IMR-90 (cell line): ENCODE measurements at regions of chr1 and their contacts with region 1.

Region 1: DNA sequence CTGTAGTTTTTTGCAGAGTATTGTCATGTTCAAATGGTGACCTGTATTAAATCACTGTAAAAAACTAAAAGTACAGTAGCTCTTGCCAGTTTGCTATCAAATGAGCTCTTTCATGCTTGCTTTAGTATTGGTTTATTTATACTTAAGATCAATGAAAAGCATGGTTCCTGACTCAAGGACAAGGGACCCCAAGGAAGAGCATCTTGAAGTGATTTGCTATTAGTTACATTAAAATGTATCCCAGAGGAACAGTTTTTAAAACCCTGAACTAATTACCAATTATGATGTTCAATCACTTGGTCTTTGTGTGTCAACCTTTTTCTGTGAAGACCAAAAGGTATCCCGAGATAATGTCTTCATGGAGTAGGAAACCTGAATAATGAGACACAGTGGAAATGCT is at the start of gene OR13G1:
- DNase-seq: no peak
- ATAC-seq: no peak
- H3K4me3 ChIP-seq: no peak within 1 kb of the TSS
- H3K27ac ChIP-seq: no peak within 1 kb of the TSS
- H3K4me1 ChIP-seq: no peaks in the 10 kb centered on the region
- H3K27me3 ChIP-seq: no peaks in the 10 kb centered on the region
- CTCF ChIP-seq: no peak
- POLR2A ChIP-seq: no peak
- RAD21 ChIP-seq: no peak
- total RNA-seq, gene OR13G1: not detected in 2 replicates

Region 2: GRCh38 chr1:247749870-247750269 is 70.2 kb after region 1 on chr1:
- CTCF ChIA-PET with region 1: no interaction called
- POLR2A ChIA-PET with region 1: no interaction called
- dilution Hi-C with region 1: no loop called
- in situ Hi-C with region 1: no loop called
- intact Hi-C with region 1: no loop called
- DNase-seq: no peak
- ATAC-seq: no peak
- H3K4me3 ChIP-seq: no peak overlapping the region
- H3K27ac ChIP-seq: no peak overlapping the region
- H3K4me1 ChIP-seq: no peaks in the 10 kb centered on the region
- H3K27me3 ChIP-seq: no peaks in the 10 kb centered on the region
- CTCF ChIP-seq: no peak
- POLR2A ChIP-seq: no peak
- RAD21 ChIP-seq: no peak

Region 3: GRCh38 chr1:248054671-248055070 is 375.0 kb after region 1 on chr1:
- CTCF ChIA-PET with region 1: no interaction called
- POLR2A ChIA-PET with region 1: no interaction called
- dilution Hi-C with region 1: no loop called
- in situ Hi-C with region 1: no loop called
- intact Hi-C with region 1: loop called (anchors 5 kb)
- DNase-seq: no peak
- ATAC-seq: no peak
- H3K4me3 ChIP-seq: no peak overlapping the region
- H3K27ac ChIP-seq: no peak overlapping the region
- H3K4me1 ChIP-seq: no peaks in the 10 kb centered on the region
- H3K27me3 ChIP-seq: no peaks in the 10 kb centered on the region
- CTCF ChIP-seq: no peak
- POLR2A ChIP-seq: no peak
- RAD21 ChIP-seq: no peak